WTC11 (cell line): ENCODE measurements at regions of chr22 and their contacts with region 1.

Region 1: GRCh38 chr22:17171313-17172171 is 12.5 kb upstream of the HDHD5 start:
- DNase-seq: peak; percentile 95
- ATAC-seq: peak; percentile 85
- H3K4me3 Mint-ChIP-seq: peak overlapping the region; percentile 67
- H3K27ac Mint-ChIP-seq: peak overlapping the region; percentile 96
- H3K4me1 Mint-ChIP-seq: peaks cover 19% of the 10 kb centered on the region
- H3K27me3 Mint-ChIP-seq: peaks cover 3% of the 10 kb centered on the region; the same call in 1 of the 2 replicates
- CTCF ChIP-seq: peak; percentile 94

Region 2: DNA sequence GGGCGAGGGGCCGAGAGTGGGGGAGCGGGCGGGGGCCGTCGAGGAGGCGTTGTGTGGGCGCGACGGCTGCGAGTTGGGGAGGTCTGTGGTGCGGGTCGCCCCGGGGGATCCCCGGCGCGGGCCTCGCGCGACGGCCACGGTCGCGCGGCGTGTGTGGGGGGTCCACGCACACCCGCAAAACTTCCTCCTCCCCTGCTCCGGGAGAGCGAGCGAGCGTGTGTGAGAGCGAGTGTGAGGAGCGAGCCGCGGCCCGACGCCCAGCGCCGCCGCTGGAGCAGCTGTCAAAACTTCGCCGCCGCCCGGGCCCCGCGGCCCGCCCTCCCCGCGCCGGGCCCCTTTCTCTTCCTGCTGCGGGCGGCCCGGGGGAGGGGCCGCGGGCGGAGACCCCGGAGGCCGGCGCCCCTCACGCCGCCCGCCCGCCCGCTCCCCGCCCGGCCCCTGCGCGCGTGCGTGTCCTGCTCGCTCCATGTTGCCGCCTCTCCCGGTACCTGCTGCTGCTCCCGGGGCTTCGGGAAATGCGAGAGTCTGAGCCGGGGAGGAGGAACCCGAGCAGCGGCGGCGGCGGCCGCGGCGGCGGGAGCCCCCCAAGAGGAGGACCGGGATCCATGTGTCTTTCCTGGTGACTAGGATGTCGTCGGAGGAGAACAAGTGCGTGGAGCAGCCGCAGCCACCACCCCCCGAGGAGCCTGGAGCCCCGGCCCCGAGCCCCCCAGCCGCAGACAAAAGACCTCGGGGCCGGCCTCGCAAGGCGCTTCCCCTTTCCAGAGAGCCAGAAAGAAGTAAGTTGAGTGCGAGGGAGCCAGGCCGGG is 569.9 kb before region 1 on chr22:
- CTCF ChIA-PET with region 1: no interaction called
- POLR2A ChIA-PET with region 1: no interaction called
- DNase-seq: no peak
- ATAC-seq: no peak
- H3K4me3 Mint-ChIP-seq: no peak overlapping the region
- H3K27ac Mint-ChIP-seq: no peak overlapping the region
- H3K4me1 Mint-ChIP-seq: no peaks in the 10 kb centered on the region
- H3K27me3 Mint-ChIP-seq: peaks cover 11% of the 10 kb centered on the region
- CTCF ChIP-seq: no peak

Region 3: GRCh38 chr22:17035246-17035645 is 136.3 kb before region 1 on chr22:
- CTCF ChIA-PET with region 1: no interaction called
- POLR2A ChIA-PET with region 1: no interaction called
- DNase-seq: no peak
- ATAC-seq: no peak
- H3K4me3 Mint-ChIP-seq: no peak overlapping the region
- H3K27ac Mint-ChIP-seq: no peak overlapping the region
- H3K4me1 Mint-ChIP-seq: no peaks in the 10 kb centered on the region
- H3K27me3 Mint-ChIP-seq: peaks cover 30% of the 10 kb centered on the region
- CTCF ChIP-seq: no peak

Region 4: GRCh38 chr22:17077255-17077654 is 94.3 kb before region 1 on chr22:
- CTCF ChIA-PET with region 1: interaction called, 18 read pairs
- POLR2A ChIA-PET with region 1: no interaction called
- DNase-seq: no peak
- ATAC-seq: no peak
- H3K4me3 Mint-ChIP-seq: no peak overlapping the region
- H3K27ac Mint-ChIP-seq: no peak overlapping the region
- H3K4me1 Mint-ChIP-seq: no peaks in the 10 kb centered on the region; the same call in 1 of the 2 replicates
- H3K27me3 Mint-ChIP-seq: no peaks in the 10 kb centered on the region
- CTCF ChIP-seq: no peak

Region 5: DNA sequence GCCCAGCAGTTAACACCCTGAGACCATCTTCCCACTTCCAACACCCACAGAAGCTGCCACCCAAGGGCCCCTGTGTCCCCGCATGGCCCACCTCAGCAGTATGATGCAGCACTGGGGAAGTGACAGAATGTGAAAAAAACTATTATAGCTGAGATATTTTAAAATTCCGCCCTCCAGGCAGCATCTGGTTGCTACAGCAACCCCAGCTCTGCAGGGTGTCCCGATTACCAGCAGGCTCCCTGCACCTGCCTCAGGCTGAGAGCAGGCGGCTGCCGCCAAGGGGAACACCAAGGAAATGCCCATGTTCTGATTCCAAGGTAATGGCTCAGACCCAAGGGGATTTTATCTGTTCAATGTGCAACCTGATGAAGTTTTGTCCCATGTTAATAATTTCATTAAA is 39.9 kb before region 1 on chr22:
- CTCF ChIA-PET with region 1: interaction called, 21 read pairs
- POLR2A ChIA-PET with region 1: no interaction called
- DNase-seq: peak; percentile 66
- ATAC-seq: peak; percentile 88
- H3K4me3 Mint-ChIP-seq: no peak overlapping the region
- H3K27ac Mint-ChIP-seq: no peak overlapping the region
- H3K4me1 Mint-ChIP-seq: peaks cover 13% of the 10 kb centered on the region
- H3K27me3 Mint-ChIP-seq: no peaks in the 10 kb centered on the region
- CTCF ChIP-seq: no peak

Region 6: GRCh38 chr22:17213976-17214375 is 42.4 kb after region 1 on chr22:
- CTCF ChIA-PET with region 1: interaction called, 44 read pairs
- POLR2A ChIA-PET with region 1: no interaction called
- DNase-seq: peak; percentile 72
- ATAC-seq: peak; percentile 70
- H3K4me3 Mint-ChIP-seq: no peak overlapping the region
- H3K27ac Mint-ChIP-seq: no peak overlapping the region
- H3K4me1 Mint-ChIP-seq: peaks cover 41% of the 10 kb centered on the region
- H3K27me3 Mint-ChIP-seq: no peaks in the 10 kb centered on the region; the same call in 1 of the 2 replicates
- CTCF ChIP-seq: peak; percentile 31; the same call in 1 of the 2 replicates

Region 7: DNA sequence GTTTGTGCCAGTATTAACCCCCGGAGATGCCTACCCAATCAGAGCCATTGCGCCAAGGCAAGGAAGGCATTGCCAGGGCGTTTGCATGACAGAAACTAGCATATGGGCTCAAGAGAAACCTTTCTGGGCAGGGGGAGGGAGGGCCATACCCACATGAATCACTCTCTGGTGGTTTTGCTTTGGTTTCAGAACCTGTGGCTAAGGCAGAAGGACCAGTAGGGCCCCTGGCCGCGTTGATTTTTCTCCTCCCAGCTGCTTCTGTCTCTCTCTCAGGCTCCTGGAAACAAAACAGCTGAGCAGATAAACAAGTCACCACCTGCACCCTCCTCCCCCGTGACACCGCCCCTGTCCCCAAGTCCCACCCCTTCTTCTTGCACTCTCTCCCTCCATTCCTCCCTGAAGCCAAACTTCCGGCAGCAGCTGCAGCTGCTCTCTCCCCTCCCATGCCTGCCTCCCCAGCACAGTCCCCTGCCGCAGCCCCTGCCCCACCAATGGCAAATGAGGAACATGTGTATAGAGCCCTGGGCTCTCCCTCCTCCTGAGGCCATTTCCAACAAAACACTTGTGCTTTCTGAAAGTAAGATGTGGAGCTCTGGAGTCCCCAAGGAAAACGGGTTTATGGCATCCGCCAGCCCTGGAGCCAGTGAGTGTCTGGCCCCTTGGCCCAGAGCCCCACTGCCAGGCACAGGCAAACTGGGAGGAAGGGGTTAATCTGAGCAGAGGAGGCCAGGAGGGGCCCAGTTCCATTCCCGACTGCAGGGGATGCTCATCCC is 86.7 kb after region 1 on chr22:
- CTCF ChIA-PET with region 1: interaction called, 80 read pairs
- POLR2A ChIA-PET with region 1: interaction called, 11 read pairs
- DNase-seq: peak; percentile 76
- ATAC-seq: peak; percentile 67
- H3K4me3 Mint-ChIP-seq: peak overlapping the region; percentile 55
- H3K27ac Mint-ChIP-seq: peak overlapping the region; percentile 100
- H3K4me1 Mint-ChIP-seq: peaks cover 74% of the 10 kb centered on the region
- H3K27me3 Mint-ChIP-seq: no peaks in the 10 kb centered on the region
- CTCF ChIP-seq: no peak

Region 8: DNA sequence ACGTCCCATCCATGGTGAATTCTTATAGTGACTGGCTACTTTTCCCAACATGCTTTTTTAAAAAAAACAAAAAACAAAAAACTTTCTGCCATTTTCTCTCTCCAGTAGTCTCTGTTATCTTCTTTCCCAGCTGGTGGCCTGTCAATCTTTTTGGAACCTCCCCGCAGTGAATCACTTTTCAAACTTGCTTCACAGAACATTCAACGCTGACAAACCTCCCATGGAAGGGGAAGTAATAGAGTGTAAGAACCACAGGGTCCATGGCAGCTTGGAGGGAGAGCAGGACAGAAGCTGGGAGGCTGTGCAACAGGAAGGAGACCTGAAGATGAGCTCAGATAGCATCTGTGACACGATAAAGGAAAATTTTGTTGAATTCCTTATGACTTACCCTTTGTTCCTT is 188.0 kb after region 1 on chr22:
- CTCF ChIA-PET with region 1: interaction called, 41 read pairs
- POLR2A ChIA-PET with region 1: no interaction called
- DNase-seq: no peak
- ATAC-seq: no peak
- H3K4me3 Mint-ChIP-seq: no peak overlapping the region
- H3K27ac Mint-ChIP-seq: no peak overlapping the region
- H3K4me1 Mint-ChIP-seq: peaks cover 16% of the 10 kb centered on the region
- H3K27me3 Mint-ChIP-seq: no peaks in the 10 kb centered on the region
- CTCF ChIP-seq: no peak

Region 9: GRCh38 chr22:17492247-17492646 is 320.7 kb after region 1 on chr22:
- CTCF ChIA-PET with region 1: interaction called, 16 read pairs
- POLR2A ChIA-PET with region 1: no interaction called
- DNase-seq: no peak
- ATAC-seq: no peak
- H3K4me3 Mint-ChIP-seq: no peak overlapping the region
- H3K27ac Mint-ChIP-seq: peak overlapping the region; percentile 91
- H3K4me1 Mint-ChIP-seq: peaks cover 53% of the 10 kb centered on the region
- H3K27me3 Mint-ChIP-seq: no peaks in the 10 kb centered on the region
- CTCF ChIP-seq: no peak